ENCODE measurements at regions of chr10 and their contacts with region 1.

Region 1: GRCh38 chr10:95561182-95562075 is at the start of gene SORBS1:
- DNase-seq: peak; percentile 83
- ATAC-seq: peak; percentile 98
- H3K4me3 Mint-ChIP-seq: peak within 1 kb of the TSS; percentile 98
- H3K27ac Mint-ChIP-seq: peak within 1 kb of the TSS; percentile 73
- H3K4me1 Mint-ChIP-seq: peaks cover 10% of the 10 kb centered on the region
- H3K27me3 Mint-ChIP-seq: peaks cover 17% of the 10 kb centered on the region
- CTCF ChIP-seq: no peak
- total RNA-seq, gene SORBS1: 0.37 and 0.42 TPM in 2 replicates

Region 2: GRCh38 chr10:95279042-95279820 is 282.2 kb before region 1 on chr10:
- CTCF ChIA-PET with region 1: no interaction called
- POLR2A ChIA-PET with region 1: no interaction called
- intact Hi-C with region 1: no loop called
- DNase-seq: no peak
- ATAC-seq: no peak
- H3K4me3 Mint-ChIP-seq: no peak overlapping the region
- H3K27ac Mint-ChIP-seq: no peak overlapping the region
- H3K4me1 Mint-ChIP-seq: peaks cover 72% of the 10 kb centered on the region
- H3K27me3 Mint-ChIP-seq: no peaks in the 10 kb centered on the region
- CTCF ChIP-seq: no peak

Region 3: DNA sequence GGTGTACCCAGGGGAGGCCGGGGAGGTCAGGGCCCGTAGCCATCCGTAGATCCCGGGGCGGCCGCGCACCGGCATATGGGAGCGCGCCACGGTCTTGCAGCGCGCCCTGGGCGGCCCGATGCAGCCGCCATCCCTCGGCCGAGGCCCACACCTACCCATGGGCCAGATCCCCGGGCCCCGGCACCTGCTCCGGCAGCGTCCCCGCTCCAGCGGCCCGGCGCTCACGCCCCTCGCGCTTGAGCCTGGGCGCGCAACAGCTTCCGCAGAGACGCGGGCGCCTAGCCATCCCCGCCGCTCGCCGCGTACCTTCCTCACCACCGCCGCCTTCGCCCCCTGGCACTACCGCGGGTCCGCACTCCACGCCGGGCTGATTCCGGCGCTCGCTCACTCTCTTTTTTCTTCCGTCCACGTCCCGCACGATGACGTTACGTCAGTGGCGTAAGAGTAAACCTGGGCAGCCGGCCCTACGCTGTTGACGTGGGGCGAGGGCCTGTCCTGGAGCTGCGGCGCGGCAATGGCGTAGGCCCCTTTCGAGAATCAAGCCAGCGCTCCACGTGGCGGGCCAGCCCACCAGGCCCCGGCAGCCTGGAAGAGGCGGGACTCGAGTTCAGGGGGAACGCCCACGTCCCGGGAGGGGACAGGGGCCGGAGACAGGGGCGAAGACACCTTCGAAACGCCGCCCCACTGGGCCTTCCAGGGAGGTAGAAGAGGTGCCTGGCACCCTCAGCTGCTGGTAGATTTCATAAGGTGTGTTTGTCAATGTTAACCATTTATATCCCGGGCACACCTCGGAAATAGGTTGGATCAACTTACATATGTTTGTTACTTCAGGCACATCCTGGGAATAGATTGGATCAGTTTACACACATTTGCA is 95.1 kb after region 1 on chr10 and contains the start of gene ALDH18A1:
- CTCF ChIA-PET with region 1: no interaction called
- POLR2A ChIA-PET with region 1: no interaction called
- intact Hi-C with region 1: loop called (anchors 2 kb)
- DNase-seq: peak; percentile 94
- ATAC-seq: peak; percentile 96
- H3K4me3 Mint-ChIP-seq: peak within 1 kb of the TSS; percentile 98
- H3K27ac Mint-ChIP-seq: peak within 1 kb of the TSS; percentile 86
- H3K4me1 Mint-ChIP-seq: peaks cover 31% of the 10 kb centered on the region
- H3K27me3 Mint-ChIP-seq: no peaks in the 10 kb centered on the region
- CTCF ChIP-seq: no peak
- total RNA-seq, gene ALDH18A1: 45.9 and 53.0 TPM in 2 replicates

Region 4: DNA sequence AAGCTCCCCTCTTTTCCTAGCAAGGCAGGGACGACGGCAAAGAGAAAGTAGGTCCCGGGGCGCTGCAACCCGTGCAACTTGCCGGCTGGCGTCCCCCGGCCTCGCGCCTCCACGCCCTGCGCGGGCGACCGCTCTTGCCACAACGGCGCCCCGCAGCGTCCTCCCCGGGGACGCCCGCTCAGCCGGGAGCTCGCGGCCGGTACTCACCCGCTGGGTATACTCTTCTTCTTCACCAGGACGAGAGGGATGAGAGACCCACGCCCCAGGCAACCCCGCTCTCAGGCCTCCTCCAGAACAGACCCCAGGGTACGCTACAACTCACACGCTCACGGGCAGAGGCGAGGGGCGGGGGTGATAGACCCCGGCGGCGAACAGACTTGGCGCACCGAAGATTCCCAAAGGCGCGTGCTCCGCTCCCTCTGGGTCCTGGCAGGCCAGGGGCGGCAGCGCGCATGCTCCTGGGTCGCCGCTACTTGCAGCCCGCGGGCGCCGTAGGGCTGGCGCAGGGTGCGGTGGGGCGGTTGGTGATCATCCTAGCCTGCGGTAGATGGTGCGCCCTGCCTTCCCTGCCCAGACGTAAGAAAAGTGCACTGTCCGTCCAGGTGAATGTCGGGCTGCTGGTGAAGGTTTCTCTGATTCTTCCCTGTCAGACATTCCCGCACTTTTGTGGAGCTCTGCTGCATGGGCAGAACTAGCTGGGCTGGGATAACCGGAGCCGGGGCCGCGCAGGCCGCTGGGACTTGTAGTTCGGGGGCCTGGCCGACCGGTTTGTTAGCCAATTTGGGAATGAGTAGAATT is 346.2 kb after region 1 on chr10 and contains the start of gene CC2D2B:
- CTCF ChIA-PET with region 1: no interaction called
- POLR2A ChIA-PET with region 1: no interaction called
- intact Hi-C with region 1: loop called (anchors 2 kb)
- DNase-seq: peak; percentile 70
- ATAC-seq: peak; percentile 91
- H3K4me3 Mint-ChIP-seq: peak within 1 kb of the TSS; percentile 94
- H3K27ac Mint-ChIP-seq: peak within 1 kb of the TSS; percentile 92
- H3K4me1 Mint-ChIP-seq: peaks cover 11% of the 10 kb centered on the region
- H3K27me3 Mint-ChIP-seq: no peaks in the 10 kb centered on the region
- CTCF ChIP-seq: no peak
- total RNA-seq, gene CC2D2B: 1.2 and 2.0 TPM in 2 replicates